ENCODE measurements at regions of chr10 and their contacts with region 1.

Region 1: DNA sequence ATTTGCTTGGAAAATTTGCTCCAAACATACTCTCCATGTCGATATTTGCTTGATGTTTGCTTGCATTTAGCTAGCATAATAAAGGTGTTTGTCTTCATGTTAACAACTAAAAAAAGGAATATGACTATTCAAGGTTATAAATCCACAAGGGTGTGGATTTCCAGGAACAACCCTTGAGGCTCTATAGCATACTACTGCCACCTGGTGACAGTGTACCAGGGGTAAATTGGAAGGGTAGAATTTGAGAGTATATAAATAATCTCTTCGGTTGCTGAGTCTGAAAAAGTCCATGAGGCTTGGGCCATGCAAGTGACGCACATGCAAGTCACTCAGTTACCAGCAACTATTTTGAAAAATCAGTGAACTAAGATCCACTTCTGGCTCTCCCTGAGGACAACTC is 68.4 kb downstream of the SLIT1 start:
- DNase-seq: peak; percentile 30
- H3K4me3 Mint-ChIP-seq: no peak overlapping the region
- H3K27ac Mint-ChIP-seq: no peak overlapping the region
- H3K4me1 Mint-ChIP-seq: no peaks in the 10 kb centered on the region
- H3K27me3 Mint-ChIP-seq: peaks cover 72% of the 10 kb centered on the region
- CTCF ChIP-seq: peak; percentile 32

Region 2: GRCh38 chr10:97037365-97038361 is 79.7 kb before region 1 on chr10:
- CTCF ChIA-PET with region 1: no interaction called
- intact Hi-C with region 1: loop called (anchors 10 kb)
- DNase-seq: peak; percentile 81
- H3K4me3 Mint-ChIP-seq: peak overlapping the region; percentile 38
- H3K27ac Mint-ChIP-seq: peak overlapping the region; percentile 7
- H3K4me1 Mint-ChIP-seq: peaks cover 28% of the 10 kb centered on the region
- H3K27me3 Mint-ChIP-seq: peaks cover 29% of the 10 kb centered on the region
- CTCF ChIP-seq: peak; percentile 77

Region 3: DNA sequence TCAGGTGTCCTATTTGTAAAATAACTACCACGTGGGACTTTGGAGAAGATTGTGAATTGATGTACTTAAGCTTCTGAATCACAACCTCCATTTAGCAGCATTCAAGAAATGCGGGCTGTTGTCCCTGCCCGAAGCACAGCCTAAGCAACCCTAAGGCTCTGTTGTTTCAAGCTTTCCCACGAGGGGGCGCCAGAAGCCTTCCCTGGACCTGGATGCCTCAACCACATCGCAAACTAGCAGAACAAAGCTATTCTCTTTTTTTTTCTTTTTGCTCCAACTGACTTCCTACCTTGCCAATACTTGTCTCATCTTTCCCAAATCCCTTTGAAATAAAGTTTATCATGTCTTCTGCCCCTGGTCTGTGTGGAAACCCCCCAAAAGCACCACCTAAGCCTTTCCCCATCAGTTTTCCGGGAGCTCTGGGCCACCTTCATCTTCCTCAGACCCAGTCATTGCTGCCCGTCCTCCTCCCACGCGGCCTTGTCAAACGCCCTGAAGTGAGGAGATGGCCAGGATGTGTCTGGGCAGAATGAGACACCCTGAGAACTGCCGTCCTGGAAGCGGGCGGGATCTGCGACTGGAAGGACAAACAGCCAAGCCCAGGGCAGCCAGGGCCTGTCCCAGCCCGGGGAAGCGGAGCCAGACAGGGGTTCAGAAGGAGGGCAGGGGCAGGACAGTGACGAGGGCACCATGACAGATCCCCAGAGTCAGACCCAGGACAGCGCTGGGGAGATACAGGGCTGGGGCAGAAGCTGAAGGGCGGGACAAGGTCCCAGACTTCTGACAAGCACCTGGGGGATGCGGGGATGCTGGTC is 44.3 kb before region 1 on chr10:
- CTCF ChIA-PET with region 1: interaction called, 6 read pairs
- intact Hi-C with region 1: loop called (anchors 5 kb)
- DNase-seq: peak; percentile 79
- H3K4me3 Mint-ChIP-seq: no peak overlapping the region
- H3K27ac Mint-ChIP-seq: no peak overlapping the region
- H3K4me1 Mint-ChIP-seq: peaks cover 7% of the 10 kb centered on the region
- H3K27me3 Mint-ChIP-seq: peaks cover 83% of the 10 kb centered on the region
- CTCF ChIP-seq: peak; percentile 55